Activated CD8-positive, alpha-beta T cell treated with anti-CD3 and anti-CD28 coated beads, Interleukin-2, amount 10 ng/mL, durations not matched to agents 7 days and 5 days (primary cell): ENCODE measurements at regions of chr1 and their contacts with region 1.

Region 1: GRCh38 chr1:182084487-182085316 is 23.2 kb upstream of the ZNF648 start:
- DNase-seq: peak; percentile 89
- ATAC-seq: peak; percentile 86
- H3K4me3 Mint-ChIP-seq: no peak overlapping the region
- H3K27ac Mint-ChIP-seq: peak overlapping the region; percentile 70
- H3K4me1 Mint-ChIP-seq: peaks cover 54% of the 10 kb centered on the region
- H3K27me3 Mint-ChIP-seq: no peaks in the 10 kb centered on the region

Region 2: DNA sequence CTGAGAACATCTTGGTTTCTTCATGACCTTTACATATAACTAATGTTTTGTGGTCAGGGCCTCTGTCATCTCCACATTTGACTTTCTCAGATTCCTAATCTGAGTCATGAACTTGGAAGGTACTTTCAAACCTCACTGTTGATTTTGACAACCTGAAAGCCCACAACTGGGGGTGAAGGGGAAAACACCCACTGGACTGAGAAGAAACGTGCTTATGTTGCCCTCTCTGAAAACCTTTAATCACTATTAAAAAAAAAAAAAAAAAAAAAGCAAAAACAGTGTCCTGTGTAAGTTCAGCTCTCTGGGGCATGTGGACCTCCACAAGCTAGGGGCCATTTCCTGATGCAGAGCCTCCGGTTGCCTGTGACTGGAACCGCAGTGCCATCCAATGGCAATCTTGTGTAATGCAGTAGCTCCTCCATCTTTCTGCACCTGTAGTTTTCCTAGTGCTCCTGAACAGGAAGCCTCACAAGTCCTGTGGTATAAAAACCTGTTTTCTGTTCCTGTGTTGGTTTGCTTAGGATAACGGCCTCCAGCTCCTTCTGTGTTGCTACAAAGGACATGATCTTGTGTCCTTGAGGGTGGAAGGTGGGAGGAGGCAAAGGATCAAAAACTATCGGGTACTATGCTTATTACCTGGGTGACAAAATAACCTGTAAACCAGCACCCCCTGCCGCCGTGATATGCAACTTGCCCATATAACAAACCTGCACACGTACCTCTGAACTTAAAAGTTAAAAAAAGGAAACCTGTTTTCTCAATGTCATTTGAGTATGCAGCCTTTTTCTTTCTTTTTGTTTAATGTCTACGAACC is 147.7 kb before region 1 on chr1:
- CTCF ChIA-PET with region 1: interaction called, 21 read pairs
- POLR2A ChIA-PET with region 1: no interaction called
- DNase-seq: peak; percentile 66
- ATAC-seq: peak; percentile 76
- H3K4me3 Mint-ChIP-seq: no peak overlapping the region
- H3K27ac Mint-ChIP-seq: no peak overlapping the region
- H3K4me1 Mint-ChIP-seq: no peaks in the 10 kb centered on the region
- H3K27me3 Mint-ChIP-seq: no peaks in the 10 kb centered on the region

Region 3: DNA sequence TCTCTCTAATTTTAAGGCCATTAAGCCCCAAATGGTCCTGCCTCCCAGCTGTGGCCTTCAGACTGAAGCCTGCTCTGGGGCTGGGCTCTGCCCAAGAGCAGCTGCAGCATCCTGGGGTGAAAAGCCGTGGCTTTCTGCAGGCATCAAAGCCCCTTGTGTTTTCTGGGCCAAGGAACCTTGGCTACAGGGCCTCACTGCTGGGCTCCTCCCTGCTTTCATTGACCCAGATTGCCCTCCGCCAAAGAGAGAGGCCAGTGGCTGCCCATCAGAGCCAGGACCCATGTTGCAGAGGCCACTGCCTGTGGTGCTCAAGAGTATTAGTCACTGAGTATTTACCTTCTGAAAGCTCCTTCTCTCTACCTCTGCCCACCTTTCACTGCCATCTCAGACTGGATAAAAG is 24.8 kb before region 1 on chr1:
- CTCF ChIA-PET with region 1: interaction called, 31 read pairs
- POLR2A ChIA-PET with region 1: no interaction called
- DNase-seq: no peak
- ATAC-seq: no peak
- H3K4me3 Mint-ChIP-seq: no peak overlapping the region
- H3K27ac Mint-ChIP-seq: no peak overlapping the region
- H3K4me1 Mint-ChIP-seq: peaks cover 10% of the 10 kb centered on the region
- H3K27me3 Mint-ChIP-seq: peaks cover 50% of the 10 kb centered on the region

Region 4: DNA sequence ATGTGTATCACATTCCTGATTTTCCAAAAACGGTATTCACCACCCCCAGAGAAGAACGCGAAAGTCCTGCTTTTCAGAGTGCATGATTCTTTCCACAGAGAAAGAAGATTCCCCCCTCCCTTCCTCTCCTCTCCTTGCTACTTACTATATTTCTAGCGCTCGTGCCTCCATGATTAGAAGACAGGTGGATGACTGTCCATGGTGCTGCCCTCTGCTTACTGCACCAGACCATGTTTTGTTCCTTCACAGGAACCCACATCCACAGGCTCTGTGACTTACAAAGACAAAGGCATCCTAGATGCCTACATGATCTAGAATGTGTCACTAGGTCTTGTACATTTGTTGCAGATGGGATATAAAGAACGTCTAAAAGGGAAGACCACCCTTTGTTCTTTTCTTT is 25.9 kb after region 1 on chr1:
- CTCF ChIA-PET with region 1: interaction called, 20 read pairs
- POLR2A ChIA-PET with region 1: no interaction called
- DNase-seq: peak; percentile 48
- ATAC-seq: no peak
- H3K4me3 Mint-ChIP-seq: no peak overlapping the region
- H3K27ac Mint-ChIP-seq: no peak overlapping the region
- H3K4me1 Mint-ChIP-seq: peaks cover 2% of the 10 kb centered on the region
- H3K27me3 Mint-ChIP-seq: peaks cover 26% of the 10 kb centered on the region

Region 5: GRCh38 chr1:182317611-182318161 is 233.0 kb after region 1 on chr1:
- CTCF ChIA-PET with region 1: no interaction called
- POLR2A ChIA-PET with region 1: no interaction called
- DNase-seq: no peak
- ATAC-seq: no peak
- H3K4me3 Mint-ChIP-seq: no peak overlapping the region
- H3K27ac Mint-ChIP-seq: no peak overlapping the region
- H3K4me1 Mint-ChIP-seq: no peaks in the 10 kb centered on the region
- H3K27me3 Mint-ChIP-seq: no peaks in the 10 kb centered on the region

Region 6: GRCh38 chr1:182363636-182364035 is 278.9 kb after region 1 on chr1:
- CTCF ChIA-PET with region 1: no interaction called
- POLR2A ChIA-PET with region 1: no interaction called
- DNase-seq: no peak
- ATAC-seq: no peak
- H3K4me3 Mint-ChIP-seq: no peak overlapping the region
- H3K27ac Mint-ChIP-seq: no peak overlapping the region
- H3K4me1 Mint-ChIP-seq: no peaks in the 10 kb centered on the region
- H3K27me3 Mint-ChIP-seq: peaks cover 11% of the 10 kb centered on the region

Region 7: DNA sequence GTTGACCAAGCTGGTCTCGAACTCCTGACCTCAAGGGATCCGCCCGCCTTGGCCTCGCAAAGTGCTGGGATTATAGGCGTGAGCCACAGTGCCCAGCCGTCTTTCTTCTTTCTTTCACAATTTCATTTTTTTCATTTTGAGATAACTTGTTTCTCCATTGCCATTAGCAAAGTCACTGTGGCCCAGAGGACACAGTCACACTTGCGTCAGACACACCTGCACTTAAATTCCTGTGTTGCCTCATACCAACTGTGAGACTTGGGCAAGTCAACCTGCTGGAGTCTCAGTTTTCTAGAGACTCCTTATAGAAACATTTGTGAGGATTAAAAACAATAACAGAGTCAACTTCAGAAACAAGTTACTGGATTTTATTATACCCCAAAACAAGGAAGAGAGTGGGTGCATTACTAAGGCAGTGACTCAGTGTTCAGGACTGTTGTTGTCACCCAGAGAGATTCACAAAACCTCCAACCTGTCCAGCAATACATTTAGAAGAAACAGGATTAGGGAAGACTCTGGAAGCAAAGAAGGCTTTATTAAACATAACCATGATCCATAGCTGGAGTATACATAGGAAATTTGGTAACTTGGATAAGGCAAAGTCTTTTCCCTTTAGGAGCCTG is 313.2 kb after region 1 on chr1:
- CTCF ChIA-PET with region 1: interaction called, 90 read pairs
- POLR2A ChIA-PET with region 1: interaction called, 4 read pairs
- DNase-seq: no peak
- ATAC-seq: no peak
- H3K4me3 Mint-ChIP-seq: no peak overlapping the region
- H3K27ac Mint-ChIP-seq: no peak overlapping the region
- H3K4me1 Mint-ChIP-seq: peaks cover 6% of the 10 kb centered on the region
- H3K27me3 Mint-ChIP-seq: peaks cover 25% of the 10 kb centered on the region